T-cell (primary cell): ENCODE measurements at regions of chr5 and their contacts with region 1.

Region 1: GRCh38 chr5:115634343-115635132 is 8.7 kb upstream of the TMED7 start:
- DNase-seq: peak; percentile 46 to 87 (median 74)
- ATAC-seq: peak; percentile 90 to 97 (median 96)
- H3K4me3 ChIP-seq: peak overlapping the region; percentile 5 to 32
- H3K4me3 Mint-ChIP-seq: peak overlapping the region; percentile 55 to 60 (median 59)
- H3K27ac ChIP-seq: no peak overlapping the region
- H3K27ac Mint-ChIP-seq: peak overlapping the region; percentile 23 to 40
- H3K4me1 ChIP-seq: peaks cover 0 to 5% of the 10 kb centered on the region in 2 experiments
- H3K4me1 Mint-ChIP-seq: peaks cover 0 to 8% (median 7%) of the 10 kb centered on the region in 3 donors
- H3K27me3 ChIP-seq: no peaks in the 10 kb centered on the region
- H3K27me3 Mint-ChIP-seq: no peaks in the 10 kb centered on the region

Region 2: DNA sequence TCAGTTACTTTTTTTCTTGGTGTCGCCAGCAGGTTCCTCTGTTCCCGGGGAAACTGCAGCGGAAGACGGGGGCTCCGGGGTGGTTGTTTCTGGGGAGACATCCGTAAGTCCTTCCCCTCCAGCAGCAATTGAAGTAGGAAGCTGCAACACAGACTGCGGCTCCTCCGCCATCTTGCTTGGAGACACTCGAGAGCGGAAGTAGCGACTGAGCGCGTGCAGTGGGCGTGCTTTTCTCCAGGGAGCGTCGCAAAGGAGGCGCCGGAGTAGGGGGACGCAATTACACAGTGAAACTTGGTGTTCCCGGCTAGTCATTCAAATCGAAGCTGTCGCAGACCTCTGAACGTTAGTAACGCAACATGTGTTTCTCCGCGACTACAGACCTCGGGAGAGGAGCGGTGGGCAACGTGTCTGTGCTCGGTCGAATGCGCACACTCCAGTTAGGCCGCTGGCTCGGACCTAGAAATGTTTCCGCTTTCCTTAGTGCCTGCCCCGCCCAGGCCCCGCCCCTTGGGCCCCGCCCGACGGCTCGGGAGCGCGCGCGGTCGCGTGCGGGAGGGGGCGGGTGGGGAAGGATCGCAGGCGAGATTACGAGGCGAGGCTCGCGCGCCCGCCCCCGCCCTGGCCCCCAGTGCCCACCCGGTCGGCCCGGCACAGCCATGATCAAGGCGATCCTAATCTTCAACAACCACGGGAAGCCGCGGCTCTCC is 207.0 kb after region 1 on chr5 and contains the starts of genes AP3S1 and ATG12:
- CTCF ChIA-PET with region 1: interaction called, 4 to 14 read pairs
- POLR2A ChIA-PET with region 1: no interaction called
- DNase-seq: peak; percentile 83 to 94 (median 89)
- ATAC-seq: peak; percentile 85 to 90 (median 89)
- H3K4me3 ChIP-seq: peak within 1 kb of the TSS; percentile 86 to 90
- H3K4me3 Mint-ChIP-seq: peak within 1 kb of the TSS; percentile 96 to 99 (median 99)
- H3K27ac ChIP-seq: peak within 1 kb of the TSS; percentile 92
- H3K27ac Mint-ChIP-seq: peak within 1 kb of the TSS; percentile 94 to 100
- H3K4me1 ChIP-seq: peaks cover 13 to 17% of the 10 kb centered on the region in 2 experiments
- H3K4me1 Mint-ChIP-seq: peaks cover 63 to 71% (median 70%) of the 10 kb centered on the region in 3 donors
- H3K27me3 ChIP-seq: no peaks in the 10 kb centered on the region
- H3K27me3 Mint-ChIP-seq: no peaks in the 10 kb centered on the region
- total RNA-seq, gene AP3S1: 36.4 to 44.2 (median 39.2) TPM
- total RNA-seq, gene ATG12: 55.2 to 61.4 (median 58.9) TPM

Region 3: GRCh38 chr5:116068028-116068632 is 433.6 kb after region 1 on chr5:
- CTCF ChIA-PET with region 1: interaction called, 3 to 14 read pairs
- POLR2A ChIA-PET with region 1: no interaction called
- DNase-seq: peak in 13 of 35 experiments; percentile 6 to 79 (median 23)
- ATAC-seq: peak in 2 of 4 experiments; percentile 44 to 57
- H3K4me3 ChIP-seq: no peak overlapping the region
- H3K4me3 Mint-ChIP-seq: no peak overlapping the region
- H3K27ac ChIP-seq: no peak overlapping the region
- H3K27ac Mint-ChIP-seq: no peak overlapping the region
- H3K4me1 ChIP-seq: no peaks in the 10 kb centered on the region
- H3K4me1 Mint-ChIP-seq: no peaks in the 10 kb centered on the region
- H3K27me3 ChIP-seq: peaks cover 0 to 3% of the 10 kb centered on the region in 2 experiments
- H3K27me3 Mint-ChIP-seq: peaks cover 21% of the 10 kb centered on the region in 2 donors